ENCODE measurements at regions of chr3 and their contacts with region 1.

Region 1: GRCh38 chr3:36911990-36912804 is 32.7 kb downstream of the TRANK1 start:
- DNase-seq: peak; percentile 97
- ATAC-seq: peak; percentile 90
- H3K4me3 ChIP-seq: peak overlapping the region; percentile 34; the same call in 1 of the 2 replicates
- H3K27ac ChIP-seq: peak overlapping the region; percentile 75
- H3K4me1 ChIP-seq: peaks cover 23% of the 10 kb centered on the region
- H3K27me3 ChIP-seq: no peaks in the 10 kb centered on the region
- CTCF ChIP-seq: no peak
- EP300 ChIP-seq: peak; percentile 32 to 61; a peak in 3 of 4 replicates
- POLR2A ChIP-seq: no peak
- RAD21 ChIP-seq: no peak

Region 2: DNA sequence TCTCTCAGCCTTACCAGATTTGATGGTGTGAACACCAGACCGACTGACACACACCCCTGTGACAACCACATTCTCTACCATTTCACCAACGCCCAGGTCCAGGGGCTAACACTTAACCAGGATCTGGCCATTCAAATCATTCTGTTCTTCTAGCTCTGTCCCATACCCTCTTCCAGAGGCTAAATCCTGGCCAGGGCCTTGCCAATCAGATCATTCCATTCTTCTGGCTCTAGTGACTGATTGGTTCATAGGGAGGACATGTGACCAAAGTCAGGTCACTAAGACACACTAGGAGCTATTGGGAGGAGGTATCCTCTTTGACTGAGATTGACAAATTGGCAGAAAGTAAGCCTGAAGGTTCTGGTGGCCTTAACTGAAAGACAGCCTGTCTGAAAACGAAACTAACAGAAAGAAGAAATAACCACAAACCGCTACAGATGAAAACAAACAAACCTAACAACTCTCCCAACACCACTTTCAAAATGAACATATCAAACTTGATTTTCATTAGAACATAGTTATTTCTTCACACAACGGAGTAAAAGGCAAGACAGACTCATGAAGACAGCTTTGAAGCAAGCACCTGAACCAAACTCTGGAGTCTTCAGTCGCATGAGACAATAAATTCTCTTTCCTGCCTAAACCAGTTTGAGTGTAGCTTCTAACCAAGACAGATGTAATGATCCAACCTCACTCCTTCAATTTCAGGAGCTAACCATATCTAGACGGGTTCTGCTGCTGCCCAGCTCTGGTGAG is 35.8 kb before region 1 on chr3:
- CTCF ChIA-PET with region 1: interaction called, 5 read pairs
- POLR2A ChIA-PET with region 1: interaction called, 3 read pairs
- RAD21 ChIA-PET with region 1: interaction called, 15 read pairs
- SMC1A ChIA-PET with region 1: interaction called, 31 read pairs
- in situ Hi-C with region 1: no loop called
- intact Hi-C with region 1: loop called (anchors 1 kb)
- DNase-seq: peak; percentile 89
- ATAC-seq: peak; percentile 99
- H3K4me3 ChIP-seq: peak overlapping the region; percentile 12; the same call in 1 of the 2 replicates
- H3K27ac ChIP-seq: peak overlapping the region; percentile 45; the same call in 1 of the 2 replicates
- H3K4me1 ChIP-seq: peaks cover 11% of the 10 kb centered on the region
- H3K27me3 ChIP-seq: no peaks in the 10 kb centered on the region
- CTCF ChIP-seq: no peak
- EP300 ChIP-seq: peak; percentile 79 to 84; a peak in 3 of 4 replicates
- POLR2A ChIP-seq: no peak
- RAD21 ChIP-seq: no peak